Cardiac septum (tissue), 1 donor: ENCODE measurements at regions of chr1 and their contacts with region 1.

Region 1: GRCh38 chr1:158035976-158036583 is 42.6 kb downstream of the KIRREL1 start:
- DNase-seq: no peak

Region 2: GRCh38 chr1:157948312-157949073 is 87.6 kb before region 1 on chr1:
- intact Hi-C with region 1: no loop called
- DNase-seq: no peak

Region 3: DNA sequence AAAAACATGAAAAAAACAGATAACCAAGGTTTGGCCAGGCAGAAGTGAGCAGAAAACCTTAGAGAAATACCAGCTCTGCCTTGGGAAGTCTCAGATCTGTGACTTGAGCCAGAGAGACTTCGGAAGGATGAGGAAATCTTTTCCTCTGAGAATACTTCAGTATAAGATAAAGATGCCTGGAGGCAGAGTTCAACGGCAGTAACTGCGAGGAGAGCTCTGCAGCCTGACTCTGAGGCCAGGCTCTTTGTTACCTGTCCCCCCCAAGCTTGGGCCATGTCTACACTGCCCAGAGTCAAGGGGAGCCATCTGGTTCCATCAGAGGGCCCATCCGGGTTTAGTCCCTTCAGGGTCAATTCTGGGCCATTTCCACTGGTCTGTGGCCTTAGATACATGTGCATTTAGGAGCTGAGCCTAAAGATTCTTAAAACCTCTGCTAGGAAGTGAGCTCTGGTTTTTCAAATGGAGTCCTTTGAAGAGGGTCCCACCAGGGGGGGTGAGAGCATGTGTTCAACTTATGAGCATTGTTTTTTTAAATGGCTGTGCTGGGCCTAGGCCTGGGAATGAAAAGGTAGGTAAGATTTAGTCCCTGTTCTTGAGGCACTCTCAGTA is 34.0 kb before region 1 on chr1:
- intact Hi-C with region 1: no loop called
- DNase-seq: no peak

Region 4: DNA sequence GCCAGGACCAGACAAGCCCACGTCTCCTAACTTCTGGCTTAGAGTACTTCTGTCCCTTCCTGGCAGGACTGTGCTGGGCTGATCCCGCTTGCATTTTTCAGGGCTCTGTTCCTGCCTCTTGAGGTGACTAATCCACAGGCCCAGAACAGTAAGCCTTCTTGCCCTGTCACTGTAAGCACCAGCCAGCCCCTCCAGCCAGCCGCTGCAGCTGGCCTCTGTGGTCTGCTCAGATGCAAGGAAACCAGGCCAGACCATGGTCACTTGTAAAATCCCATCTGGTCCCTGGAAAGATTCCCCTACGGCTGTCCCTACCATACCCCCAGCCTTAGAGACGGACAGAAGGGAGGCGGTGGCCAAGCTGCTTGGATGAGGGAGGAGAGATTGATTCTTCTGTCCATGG is 31.6 kb after region 1 on chr1:
- intact Hi-C with region 1: no loop called
- DNase-seq: no peak

Region 5: DNA sequence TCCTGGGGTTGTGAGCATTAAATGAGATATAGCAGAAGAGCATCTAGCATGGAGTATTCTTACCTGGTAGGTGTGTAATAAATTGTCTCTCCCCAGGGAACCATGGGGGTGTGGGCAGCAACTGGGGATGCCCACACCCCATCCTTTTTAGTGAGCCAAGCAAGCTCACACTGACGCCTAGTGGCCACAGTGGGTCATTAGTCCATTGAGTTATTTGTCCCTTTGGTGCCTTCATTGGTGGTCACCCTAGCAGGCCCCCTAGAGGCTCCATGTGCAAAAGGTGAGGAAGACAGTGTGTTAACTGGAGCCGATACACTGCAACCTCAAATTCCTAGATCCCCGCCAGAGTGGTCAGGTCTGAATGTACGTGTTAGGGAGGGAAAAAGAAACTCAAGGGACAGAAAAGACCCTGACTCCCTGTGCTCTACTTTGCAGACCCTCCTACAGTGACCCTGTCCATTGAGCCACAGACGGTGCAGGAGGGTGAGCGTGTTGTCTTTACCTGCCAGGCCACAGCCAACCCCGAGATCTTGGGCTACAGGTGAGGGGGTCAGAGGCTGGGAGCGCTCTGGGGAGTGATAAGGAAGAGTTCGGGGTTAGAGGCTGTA is 51.3 kb after region 1 on chr1:
- intact Hi-C with region 1: loop called (anchors 5 kb)
- DNase-seq: no peak

Region 6: DNA sequence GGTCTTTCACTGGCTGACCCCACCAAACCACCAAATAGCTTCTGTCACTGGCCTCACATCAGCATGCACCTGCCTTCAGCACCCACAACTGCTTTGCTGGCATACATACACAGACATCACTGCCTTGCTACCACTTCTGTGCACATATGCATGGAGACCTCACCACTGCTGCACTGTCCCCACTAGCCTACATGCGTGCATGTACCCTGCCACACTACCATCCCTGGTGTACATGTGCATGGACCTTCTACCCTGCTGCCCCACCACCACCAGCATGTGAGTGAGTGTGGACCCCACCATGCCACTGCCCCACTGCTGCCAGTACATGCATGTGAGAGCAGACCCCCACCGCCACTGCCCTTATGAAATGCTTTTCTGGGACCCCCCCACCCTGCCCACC is 259.7 kb after region 1 on chr1:
- intact Hi-C with region 1: no loop called
- DNase-seq: no peak